ENCODE measurements at regions of chr7 and their contacts with region 1.

Region 1: GRCh38 chr7:116525913-116526861 is 1.4 kb downstream of the CAV1 start:
- DNase-seq: peak; percentile 84
- H3K4me3 ChIP-seq: peak overlapping the region; percentile 74 to 98 (median 90)
- H3K27ac ChIP-seq: peak overlapping the region; percentile 97
- H3K4me1 ChIP-seq: peaks cover 72% of the 10 kb centered on the region
- H3K27me3 ChIP-seq: no peaks in the 10 kb centered on the region
- CTCF ChIP-seq: peak; percentile 72 to 88
- POLR2A ChIP-seq: peak; percentile 81

Region 2: DNA sequence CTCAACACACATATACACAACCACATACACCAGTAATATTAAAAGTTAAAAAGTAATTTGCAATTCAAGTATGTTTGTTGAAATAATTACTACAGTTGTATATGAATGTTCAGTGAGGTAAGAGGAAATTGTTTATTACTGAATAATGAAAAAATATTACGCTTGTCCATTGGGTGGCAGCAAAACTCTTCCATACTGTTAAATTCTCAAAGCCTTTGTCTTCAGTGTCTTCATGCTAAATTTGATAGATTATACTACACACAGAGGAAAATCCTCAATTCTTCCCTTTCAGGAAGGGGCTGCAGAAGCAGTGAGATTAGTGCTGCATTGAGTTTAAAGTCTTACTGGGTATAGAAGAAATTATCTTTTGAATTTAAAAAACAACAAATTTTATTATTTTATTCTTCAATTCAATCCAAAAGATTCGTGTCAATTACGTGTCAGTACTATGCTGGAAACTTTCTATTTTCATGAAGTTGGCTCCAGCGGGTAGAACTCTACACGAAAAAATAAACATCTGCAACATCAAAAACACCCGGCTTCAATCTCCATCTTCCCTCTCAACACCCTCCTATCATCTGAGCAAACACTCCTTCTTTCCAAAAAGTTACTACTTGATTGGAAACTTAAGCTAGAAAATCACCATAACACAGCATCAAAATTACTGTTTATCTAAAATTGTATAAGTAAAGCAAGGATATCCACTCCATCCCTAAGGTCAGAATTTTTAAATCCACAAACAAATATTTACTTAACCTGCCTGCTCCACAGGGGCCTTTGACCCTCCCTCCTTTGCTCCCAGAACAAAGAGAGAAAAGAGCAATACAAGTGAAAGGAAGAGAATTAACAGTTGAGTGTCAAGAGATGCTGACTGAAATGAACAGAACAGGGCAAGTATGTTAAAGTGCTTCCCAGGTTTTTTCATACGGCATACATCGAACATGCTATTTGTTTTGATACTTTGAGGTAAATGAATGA is 352.8 kb before region 1 on chr7:
- CTCF ChIA-PET with region 1: no interaction called
- POLR2A ChIA-PET with region 1: no interaction called
- dilution Hi-C with region 1: no loop called
- intact Hi-C with region 1: loop called (anchors 2 kb)
- DNase-seq: peak; percentile 84
- H3K4me3 ChIP-seq: no peak overlapping the region
- H3K27ac ChIP-seq: no peak overlapping the region
- H3K4me1 ChIP-seq: no peaks in the 10 kb centered on the region
- H3K27me3 ChIP-seq: peaks cover 0 to 3% of the 10 kb centered on the region in 2 experiments
- CTCF ChIP-seq: peak in 1 of 2 donors; percentile 20
- POLR2A ChIP-seq: no peak

Region 3: GRCh38 chr7:116258734-116259133 is 267.5 kb before region 1 on chr7:
- CTCF ChIA-PET with region 1: interaction called, 46 read pairs
- POLR2A ChIA-PET with region 1: interaction called, 12 read pairs
- dilution Hi-C with region 1: loop called (anchors 25 kb)
- intact Hi-C with region 1: loop called (anchors 1 kb)
- DNase-seq: peak; percentile 85
- H3K4me3 ChIP-seq: no peak overlapping the region
- H3K27ac ChIP-seq: peak overlapping the region; percentile 32
- H3K4me1 ChIP-seq: peaks cover 28% of the 10 kb centered on the region
- H3K27me3 ChIP-seq: no peaks in the 10 kb centered on the region
- CTCF ChIP-seq: peak; percentile 43 to 48
- POLR2A ChIP-seq: peak; percentile 22

Region 4: GRCh38 chr7:116327752-116328151 is 198.4 kb before region 1 on chr7:
- CTCF ChIA-PET with region 1: interaction called, 4 read pairs
- POLR2A ChIA-PET with region 1: no interaction called
- dilution Hi-C with region 1: loop called (anchors 25 kb)
- intact Hi-C with region 1: loop called (anchors 1 kb)
- DNase-seq: peak; percentile 97
- H3K4me3 ChIP-seq: peak overlapping the region; percentile 43 to 99 (median 98)
- H3K27ac ChIP-seq: peak overlapping the region; percentile 97
- H3K4me1 ChIP-seq: peaks cover 48% of the 10 kb centered on the region
- H3K27me3 ChIP-seq: no peaks in the 10 kb centered on the region
- CTCF ChIP-seq: no peak
- POLR2A ChIP-seq: peak; percentile 97

Region 5: DNA sequence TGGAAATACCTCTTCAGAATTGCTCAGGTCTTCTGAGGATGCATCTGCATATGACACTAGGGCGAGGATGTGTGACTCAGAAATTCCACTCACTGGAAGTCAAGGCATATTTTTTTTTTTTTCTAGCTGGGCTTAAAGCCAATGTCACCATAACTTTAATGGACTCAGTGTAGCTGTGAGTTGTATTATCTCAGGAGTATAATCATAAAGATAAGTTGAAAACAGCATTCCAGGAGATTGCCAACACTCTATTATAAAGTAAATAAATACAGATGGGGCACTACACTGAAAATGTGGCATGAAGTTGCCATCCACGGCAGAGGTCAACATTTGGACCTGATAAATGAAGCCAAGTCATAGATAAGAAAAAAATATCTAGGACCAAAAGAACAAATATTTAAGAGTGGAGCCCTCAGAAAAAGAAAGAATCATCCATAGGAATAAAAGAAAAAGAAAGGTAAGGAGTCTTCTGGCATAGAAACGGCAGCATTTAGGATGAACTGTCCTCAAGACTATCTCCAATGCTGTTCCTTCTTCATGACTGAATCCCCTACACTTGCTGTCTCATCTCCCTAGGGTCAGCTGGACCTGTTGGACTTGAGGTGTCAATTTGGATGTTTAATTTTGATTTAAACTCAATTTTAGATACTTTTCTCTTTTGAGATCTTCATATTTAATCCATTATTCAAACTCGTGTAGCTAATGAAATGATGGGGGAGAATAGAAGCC is 99.6 kb before region 1 on chr7:
- CTCF ChIA-PET with region 1: interaction called, 3 read pairs
- POLR2A ChIA-PET with region 1: interaction called, 4 read pairs
- dilution Hi-C with region 1: no loop called
- intact Hi-C with region 1: loop called (anchors 1 kb)
- DNase-seq: peak; percentile 98
- H3K4me3 ChIP-seq: no peak overlapping the region
- H3K27ac ChIP-seq: peak overlapping the region; percentile 91
- H3K4me1 ChIP-seq: peaks cover 26% of the 10 kb centered on the region
- H3K27me3 ChIP-seq: no peaks in the 10 kb centered on the region
- CTCF ChIP-seq: no peak
- POLR2A ChIP-seq: peak; percentile 65

Region 6: GRCh38 chr7:116511552-116512519 is 14.4 kb before region 1 on chr7:
- CTCF ChIA-PET with region 1: interaction called, 13 read pairs
- POLR2A ChIA-PET with region 1: interaction called, 6 read pairs
- dilution Hi-C with region 1: no loop called
- intact Hi-C with region 1: loop called (anchors 1 kb)
- DNase-seq: peak; percentile 96
- H3K4me3 ChIP-seq: peak overlapping the region; percentile 32 to 70 (median 45)
- H3K27ac ChIP-seq: peak overlapping the region; percentile 96
- H3K4me1 ChIP-seq: peaks cover 54% of the 10 kb centered on the region
- H3K27me3 ChIP-seq: no peaks in the 10 kb centered on the region
- CTCF ChIP-seq: no peak
- POLR2A ChIP-seq: peak; percentile 76

Region 7: DNA sequence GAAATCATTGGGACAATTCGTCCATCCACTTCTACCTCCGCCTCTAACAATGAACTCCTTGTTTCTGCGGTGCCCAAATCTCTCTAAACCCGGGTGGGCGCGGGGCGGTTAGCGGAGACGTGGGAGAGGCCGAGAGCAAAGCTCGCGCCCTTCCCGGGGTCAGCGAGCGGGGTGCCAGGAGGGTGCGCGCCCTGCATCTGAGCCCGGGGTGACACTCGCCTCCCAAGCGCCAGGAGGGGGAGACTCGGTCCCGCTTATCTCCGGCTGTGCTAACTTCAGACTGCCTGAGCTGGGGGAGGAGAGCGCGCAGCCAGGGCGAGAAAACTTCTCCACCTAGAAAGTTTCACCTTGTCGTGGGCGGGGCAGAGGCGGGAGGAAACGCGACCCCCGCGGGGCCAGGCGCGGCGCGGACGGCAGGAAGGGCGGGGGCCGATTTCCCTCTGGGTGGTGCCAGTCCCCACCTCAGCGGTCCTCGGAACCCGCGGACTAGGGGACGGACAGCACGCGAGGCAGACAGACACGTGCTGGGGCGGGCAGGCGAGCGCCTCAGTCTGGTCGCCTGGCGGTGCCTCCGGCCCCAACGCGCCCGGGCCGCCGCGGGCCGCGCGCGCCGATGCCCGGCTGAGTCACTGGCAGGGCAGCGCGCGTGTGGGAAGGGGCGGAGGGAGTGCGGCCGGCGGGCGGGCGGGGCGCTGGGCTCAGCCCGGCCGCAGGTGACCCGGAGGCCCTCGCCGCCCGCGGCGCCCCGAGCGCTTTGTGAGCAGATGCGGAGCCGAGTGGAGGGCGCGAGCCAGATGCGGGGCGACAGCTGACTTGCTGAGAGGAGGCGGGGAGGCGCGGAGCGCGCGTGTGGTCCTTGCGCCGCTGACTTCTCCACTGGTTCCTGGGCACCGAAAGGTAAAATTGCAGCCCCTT is 145.8 kb after region 1 on chr7 and contains the start of gene MET:
- CTCF ChIA-PET with region 1: no interaction called
- POLR2A ChIA-PET with region 1: no interaction called
- dilution Hi-C with region 1: no loop called
- intact Hi-C with region 1: loop called (anchors 10 kb)
- DNase-seq: peak; percentile 86
- H3K4me3 ChIP-seq: peak within 1 kb of the TSS; percentile 72 to 92 (median 80)
- H3K27ac ChIP-seq: peak within 1 kb of the TSS; percentile 81
- H3K4me1 ChIP-seq: peaks cover 27% of the 10 kb centered on the region
- H3K27me3 ChIP-seq: no peaks in the 10 kb centered on the region
- CTCF ChIP-seq: peak; percentile 21 to 62
- POLR2A ChIP-seq: peak; percentile 56
- total RNA-seq, gene MET: 44.5 and 52.0 TPM in 2 replicates

Region 8: DNA sequence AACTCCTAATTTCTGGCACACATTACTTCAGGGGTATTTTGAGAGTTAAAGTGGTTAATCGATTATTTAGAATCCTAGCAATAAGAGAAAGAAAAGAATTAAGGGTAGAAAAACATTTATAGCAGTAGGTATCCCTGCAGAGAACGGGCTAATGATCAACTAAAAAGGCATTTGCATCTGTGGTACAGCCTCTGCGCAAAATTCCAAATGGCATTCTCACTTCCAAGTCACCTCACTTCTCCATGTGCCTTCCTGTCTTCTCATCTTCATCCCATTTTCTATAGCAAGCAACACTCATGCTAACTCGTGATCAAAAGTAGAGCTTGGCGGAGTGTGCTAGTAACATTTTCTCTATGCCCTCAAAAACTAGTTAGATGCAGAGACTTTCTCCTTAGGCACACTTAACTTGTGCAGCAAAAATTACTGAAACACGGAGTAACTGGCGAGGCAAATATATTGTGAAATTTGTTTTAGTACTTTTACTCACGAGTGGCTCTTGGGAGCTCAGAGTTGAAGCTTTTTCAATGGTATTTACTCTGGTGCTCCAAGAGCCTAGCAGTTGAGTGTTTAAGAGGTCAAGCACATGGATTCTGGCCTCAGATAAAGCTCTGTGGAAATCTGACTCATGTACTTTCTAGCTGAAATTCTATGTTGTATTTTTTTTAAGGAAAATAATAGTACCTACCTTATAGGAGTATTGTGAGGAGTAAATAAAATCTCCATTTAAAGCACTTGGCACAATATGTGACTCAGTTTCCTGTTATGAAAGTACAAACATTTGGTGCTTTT is 210.9 kb after region 1 on chr7:
- CTCF ChIA-PET with region 1: no interaction called
- POLR2A ChIA-PET with region 1: no interaction called
- dilution Hi-C with region 1: no loop called
- intact Hi-C with region 1: no loop called
- DNase-seq: peak; percentile 90
- H3K4me3 ChIP-seq: peak overlapping the region in 1 of 3 experiments; percentile 19
- H3K27ac ChIP-seq: peak overlapping the region; percentile 58
- H3K4me1 ChIP-seq: peaks cover 40% of the 10 kb centered on the region
- H3K27me3 ChIP-seq: no peaks in the 10 kb centered on the region
- CTCF ChIP-seq: no peak
- POLR2A ChIP-seq: no peak

Region 9: GRCh38 chr7:116815041-116815440 is 288.9 kb after region 1 on chr7:
- CTCF ChIA-PET with region 1: no interaction called
- POLR2A ChIA-PET with region 1: no interaction called
- dilution Hi-C with region 1: no loop called
- intact Hi-C with region 1: no loop called
- DNase-seq: no peak
- H3K4me3 ChIP-seq: no peak overlapping the region
- H3K27ac ChIP-seq: no peak overlapping the region
- H3K4me1 ChIP-seq: no peaks in the 10 kb centered on the region
- H3K27me3 ChIP-seq: no peaks in the 10 kb centered on the region
- CTCF ChIP-seq: no peak
- POLR2A ChIP-seq: no peak

Measured in endothelial cell of umbilical vein (primary cell).